Calu3 (cell line): ENCODE measurements at regions of chr1 and their contacts with region 1.

Region 1: DNA sequence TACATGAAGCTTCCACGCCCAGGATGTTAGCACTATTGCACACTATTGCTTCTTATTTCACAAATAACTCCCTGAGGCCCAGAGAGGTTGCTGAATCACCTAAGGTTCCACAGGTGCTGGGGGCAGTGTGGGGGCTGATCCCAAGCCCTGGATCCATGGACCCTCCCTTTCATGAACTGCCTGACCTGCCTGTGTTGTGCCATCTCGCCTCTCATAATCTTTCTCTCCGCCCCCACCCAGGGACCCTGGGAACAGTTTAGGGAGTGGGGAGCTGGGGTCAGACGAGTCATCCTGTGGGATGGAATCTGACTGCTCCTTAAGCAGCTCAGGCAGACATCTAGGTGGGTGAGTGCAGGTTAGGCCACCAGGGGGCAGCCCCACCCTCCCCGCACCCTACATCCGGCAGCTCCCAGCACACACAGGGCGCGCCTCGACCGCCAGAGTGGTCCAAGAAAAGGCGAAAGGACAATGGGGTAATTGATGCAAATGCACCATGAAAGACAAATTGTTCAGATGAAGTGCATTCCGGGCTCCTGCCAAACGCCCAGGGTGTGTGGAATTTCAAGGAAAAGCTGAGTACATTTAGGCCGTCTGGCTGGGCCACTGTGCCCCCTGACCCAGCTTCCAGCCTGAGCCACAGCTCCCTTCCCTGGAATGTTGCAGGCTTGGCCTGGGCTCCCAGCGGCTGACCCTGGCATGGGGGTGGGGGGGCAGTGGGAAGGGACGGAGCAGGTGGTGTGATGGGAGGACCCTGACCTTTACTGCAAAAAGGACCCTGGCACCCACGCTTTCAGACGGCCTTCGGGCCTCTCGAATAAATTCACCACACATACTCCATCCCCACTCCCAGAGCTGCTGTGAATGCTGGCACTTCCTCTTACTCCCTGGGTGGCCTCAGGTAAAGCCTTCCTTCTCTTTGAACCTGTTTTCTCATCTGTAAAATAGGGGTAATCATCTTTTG is 20.8 kb downstream of the PHLDA3 start:
- DNase-seq: peak; percentile 88
- H3K4me3 Mint-ChIP-seq: no peak overlapping the region
- H3K27ac Mint-ChIP-seq: peak overlapping the region; percentile 29
- H3K4me1 Mint-ChIP-seq: peaks cover 46% of the 10 kb centered on the region
- H3K27me3 Mint-ChIP-seq: no peaks in the 10 kb centered on the region
- CTCF ChIP-seq: peak; percentile 91

Region 2: DNA sequence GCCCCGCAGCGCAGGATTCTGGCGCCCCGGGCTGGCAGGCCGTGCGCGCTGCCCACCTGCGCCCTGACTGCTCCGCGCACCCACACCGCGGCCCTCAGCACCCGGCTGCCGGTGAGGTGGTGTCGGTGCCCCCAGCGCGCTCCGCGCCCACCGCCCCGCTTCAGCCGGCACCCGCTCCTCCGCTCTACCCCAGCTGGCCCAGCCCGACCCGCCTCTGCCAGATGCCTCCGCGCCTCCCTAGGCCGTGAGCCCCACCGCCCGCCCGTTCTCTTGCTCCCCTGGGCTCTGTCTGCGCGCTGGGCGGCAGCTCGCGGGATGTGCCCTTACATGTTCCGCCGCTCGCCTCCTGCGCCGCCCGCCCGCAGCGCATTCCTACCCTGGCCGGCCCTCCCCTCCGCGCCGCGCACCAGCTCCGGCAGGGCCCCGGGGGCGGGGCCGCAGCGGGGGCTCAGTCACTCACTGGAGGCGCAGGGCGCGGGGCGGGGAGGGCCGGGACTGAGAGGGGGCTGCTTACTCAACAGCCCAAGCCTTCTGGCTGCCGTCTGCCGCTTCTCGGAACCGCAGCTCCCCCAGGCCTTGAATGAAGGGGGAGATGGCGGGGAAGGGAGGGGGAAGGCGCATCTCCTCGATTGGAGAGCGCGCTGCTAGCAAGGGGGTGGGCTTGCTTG is 20.8 kb after region 1 on chr1 and contains the start of gene PHLDA3:
- CTCF ChIA-PET with region 1: interaction called, 65 read pairs
- intact Hi-C with region 1: no loop called
- DNase-seq: peak; percentile 82
- H3K4me3 Mint-ChIP-seq: peak within 1 kb of the TSS; percentile 85
- H3K27ac Mint-ChIP-seq: peak within 1 kb of the TSS; percentile 61
- H3K4me1 Mint-ChIP-seq: peaks cover 37% of the 10 kb centered on the region
- H3K27me3 Mint-ChIP-seq: no peaks in the 10 kb centered on the region
- CTCF ChIP-seq: peak; percentile 21
- total RNA-seq, gene PHLDA3: 31.1 and 36.7 TPM in 2 replicates

Region 3: DNA sequence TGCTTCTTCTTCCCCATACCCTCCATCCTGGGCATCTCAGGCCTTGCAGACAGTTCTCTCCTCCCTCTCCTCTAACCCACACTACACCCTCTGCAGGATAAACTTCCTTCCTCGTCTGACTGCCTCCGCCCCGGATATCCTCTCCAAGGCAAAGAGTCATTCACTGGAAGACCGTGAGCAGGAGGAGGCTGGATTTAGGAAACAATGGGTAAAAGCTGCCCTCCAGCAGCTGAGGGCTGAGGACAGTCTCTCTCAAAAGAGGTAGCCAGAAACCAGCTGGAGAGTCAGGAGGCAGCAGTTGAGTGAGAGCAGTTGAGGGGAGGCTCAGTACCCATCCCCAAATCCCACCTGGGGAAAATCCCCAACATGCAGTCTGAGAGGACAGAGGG is 57.3 kb after region 1 on chr1:
- CTCF ChIA-PET with region 1: interaction called, 16 read pairs
- intact Hi-C with region 1: no loop called
- DNase-seq: peak; percentile 50
- H3K4me3 Mint-ChIP-seq: peak overlapping the region; percentile 63
- H3K27ac Mint-ChIP-seq: peak overlapping the region; percentile 50
- H3K4me1 Mint-ChIP-seq: peaks cover 53% of the 10 kb centered on the region
- H3K27me3 Mint-ChIP-seq: no peaks in the 10 kb centered on the region
- CTCF ChIP-seq: no peak

Region 4: GRCh38 chr1:201511941-201512539 is 63.8 kb after region 1 on chr1:
- CTCF ChIA-PET with region 1: interaction called, 51 read pairs
- intact Hi-C with region 1: loop called (anchors 1 kb)
- DNase-seq: no peak
- H3K4me3 Mint-ChIP-seq: no peak overlapping the region
- H3K27ac Mint-ChIP-seq: no peak overlapping the region
- H3K4me1 Mint-ChIP-seq: peaks cover 46% of the 10 kb centered on the region
- H3K27me3 Mint-ChIP-seq: no peaks in the 10 kb centered on the region
- CTCF ChIP-seq: no peak

Region 5: GRCh38 chr1:201625226-201625761 is 177.1 kb after region 1 on chr1:
- CTCF ChIA-PET with region 1: no interaction called
- intact Hi-C with region 1: no loop called
- DNase-seq: no peak
- H3K4me3 Mint-ChIP-seq: no peak overlapping the region
- H3K27ac Mint-ChIP-seq: no peak overlapping the region
- H3K4me1 Mint-ChIP-seq: no peaks in the 10 kb centered on the region
- H3K27me3 Mint-ChIP-seq: no peaks in the 10 kb centered on the region
- CTCF ChIP-seq: no peak

Region 6: GRCh38 chr1:201655243-201655642 is 207.1 kb after region 1 on chr1:
- CTCF ChIA-PET with region 1: no interaction called
- intact Hi-C with region 1: no loop called
- DNase-seq: no peak
- H3K4me3 Mint-ChIP-seq: no peak overlapping the region
- H3K27ac Mint-ChIP-seq: no peak overlapping the region
- H3K4me1 Mint-ChIP-seq: no peaks in the 10 kb centered on the region
- H3K27me3 Mint-ChIP-seq: peaks cover 41% of the 10 kb centered on the region
- CTCF ChIP-seq: no peak